CD8-positive, alpha-beta memory T cell (primary cell): ENCODE measurements at regions of chr20 and their contacts with region 1.

Region 1: DNA sequence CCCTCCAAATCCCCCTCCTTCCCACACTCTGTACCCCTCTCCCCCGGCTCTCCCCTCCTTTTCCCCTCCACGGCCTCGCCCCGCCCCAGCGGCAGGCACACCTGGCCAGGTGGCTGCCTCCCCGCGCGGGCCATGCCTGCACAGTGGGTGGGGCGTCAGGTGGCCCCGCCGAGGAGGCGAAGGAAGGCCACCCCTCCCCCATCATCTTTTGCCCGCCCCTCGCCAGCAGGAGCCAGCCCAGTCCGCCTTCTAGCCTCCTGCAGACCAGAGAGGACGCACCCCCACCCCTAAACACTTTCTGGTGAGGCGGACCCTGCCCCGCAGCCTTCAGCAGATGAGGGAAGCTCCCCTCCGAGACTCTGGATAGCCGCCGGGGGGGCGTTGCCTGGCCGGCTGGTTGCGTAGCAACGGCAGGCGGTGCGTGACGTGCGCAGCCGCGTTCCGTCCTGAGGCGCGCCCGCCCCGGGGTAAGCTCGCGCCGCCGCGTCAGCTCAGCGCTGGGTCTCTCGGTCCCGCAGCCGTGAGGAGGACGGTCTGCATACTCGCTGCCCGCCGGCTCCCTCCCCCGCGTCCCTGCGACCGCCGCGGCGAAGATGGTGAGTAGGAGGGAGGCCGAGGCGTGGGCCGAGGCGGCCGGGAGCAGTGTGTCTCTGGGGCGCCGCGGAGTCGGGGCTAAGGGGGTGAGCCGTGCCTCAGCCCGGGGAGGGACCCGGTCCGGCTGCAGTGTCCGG is at the start of gene DSTN:
- DNase-seq: peak; percentile 82 to 91 (median 89)
- H3K4me3 ChIP-seq: peak within 1 kb of the TSS; percentile 75
- H3K4me3 Mint-ChIP-seq: peak within 1 kb of the TSS; percentile 88 to 97 (median 94)
- H3K27ac ChIP-seq: peak within 1 kb of the TSS; percentile 84
- H3K27ac Mint-ChIP-seq: peak within 1 kb of the TSS; percentile 92 to 97 (median 94)
- H3K4me1 ChIP-seq: peaks cover 12% of the 10 kb centered on the region
- H3K4me1 Mint-ChIP-seq: peaks cover 28 to 48% (median 31%) of the 10 kb centered on the region in 3 donors
- H3K27me3 ChIP-seq: no peaks in the 10 kb centered on the region
- H3K27me3 Mint-ChIP-seq: peaks cover 2 to 6% of the 10 kb centered on the region in 2 donors
- total RNA-seq, gene DSTN: 66.4 to 66.9 TPM

Region 2: GRCh38 chr20:17558154-17558940 is 11.4 kb before region 1 on chr20:
- CTCF ChIA-PET with region 1: no interaction called
- POLR2A ChIA-PET with region 1: no interaction called
- DNase-seq: no peak
- H3K4me3 ChIP-seq: no peak overlapping the region
- H3K4me3 Mint-ChIP-seq: no peak overlapping the region
- H3K27ac ChIP-seq: peak overlapping the region; percentile 43
- H3K27ac Mint-ChIP-seq: peak overlapping the region in 1 of 8 donors; percentile 43
- H3K4me1 ChIP-seq: no peaks in the 10 kb centered on the region
- H3K4me1 Mint-ChIP-seq: peaks cover 2 to 6% (median 6%) of the 10 kb centered on the region in 3 donors
- H3K27me3 ChIP-seq: no peaks in the 10 kb centered on the region
- H3K27me3 Mint-ChIP-seq: peaks cover 0 to 6% of the 10 kb centered on the region in 2 donors

Region 3: GRCh38 chr20:17611540-17612286 is 41.9 kb after region 1 on chr20:
- CTCF ChIA-PET with region 1: interaction called, 10 read pairs
- POLR2A ChIA-PET with region 1: interaction called, 8 read pairs
- DNase-seq: peak in 1 of 5 donors; percentile 33
- H3K4me3 ChIP-seq: peak overlapping the region; percentile 32
- H3K4me3 Mint-ChIP-seq: peak overlapping the region; percentile 7 to 82 (median 75)
- H3K27ac ChIP-seq: peak overlapping the region; percentile 46
- H3K27ac Mint-ChIP-seq: peak overlapping the region; percentile 87 to 99 (median 98)
- H3K4me1 ChIP-seq: peaks cover 42% of the 10 kb centered on the region
- H3K4me1 Mint-ChIP-seq: peaks cover 35 to 51% (median 36%) of the 10 kb centered on the region in 3 donors
- H3K27me3 ChIP-seq: no peaks in the 10 kb centered on the region
- H3K27me3 Mint-ChIP-seq: no peaks in the 10 kb centered on the region